ENCODE measurements at regions of chr6 and their contacts with region 1.

Region 1: GRCh38 chr6:110958329-110959192 is at the start of gene GTF3C6:
- DNase-seq: peak; percentile 93
- ATAC-seq: peak; percentile 99
- H3K4me3 Mint-ChIP-seq: peak within 1 kb of the TSS; percentile 96
- H3K27ac Mint-ChIP-seq: peak within 1 kb of the TSS; percentile 98
- H3K4me1 Mint-ChIP-seq: peaks cover 10% of the 10 kb centered on the region
- H3K27me3 Mint-ChIP-seq: peaks cover 4% of the 10 kb centered on the region
- total RNA-seq, gene GTF3C6: 60.9 to 65.4 TPM

Region 2: DNA sequence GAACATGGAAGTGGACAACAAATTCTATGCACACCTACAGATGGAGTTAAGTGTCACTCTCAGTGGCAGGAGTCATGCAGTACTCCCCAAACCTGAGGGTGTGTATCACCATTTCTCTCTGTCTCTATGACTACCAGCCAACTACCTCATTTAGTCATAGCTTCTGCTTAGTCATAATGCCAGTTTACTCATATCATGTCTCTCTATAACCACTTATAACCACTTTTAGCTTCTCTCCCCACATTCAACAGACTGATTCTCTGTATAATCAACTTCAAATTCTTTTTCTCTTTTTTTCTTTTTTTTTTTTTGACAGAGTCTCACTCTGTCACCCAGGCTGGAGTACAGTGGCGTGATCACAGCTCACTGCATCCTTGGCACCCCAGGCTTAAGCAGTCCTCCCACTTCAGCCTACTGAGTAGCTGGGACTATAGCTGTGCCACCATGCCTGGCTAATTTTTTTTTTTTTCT is 13.8 kb before region 1 on chr6:
- POLR2A ChIA-PET with region 1: interaction called, 12 read pairs
- DNase-seq: no peak
- ATAC-seq: peak; percentile 96
- H3K4me3 Mint-ChIP-seq: no peak overlapping the region
- H3K27ac Mint-ChIP-seq: no peak overlapping the region
- H3K4me1 Mint-ChIP-seq: peaks cover 5% of the 10 kb centered on the region
- H3K27me3 Mint-ChIP-seq: peaks cover 2% of the 10 kb centered on the region

Region 3: DNA sequence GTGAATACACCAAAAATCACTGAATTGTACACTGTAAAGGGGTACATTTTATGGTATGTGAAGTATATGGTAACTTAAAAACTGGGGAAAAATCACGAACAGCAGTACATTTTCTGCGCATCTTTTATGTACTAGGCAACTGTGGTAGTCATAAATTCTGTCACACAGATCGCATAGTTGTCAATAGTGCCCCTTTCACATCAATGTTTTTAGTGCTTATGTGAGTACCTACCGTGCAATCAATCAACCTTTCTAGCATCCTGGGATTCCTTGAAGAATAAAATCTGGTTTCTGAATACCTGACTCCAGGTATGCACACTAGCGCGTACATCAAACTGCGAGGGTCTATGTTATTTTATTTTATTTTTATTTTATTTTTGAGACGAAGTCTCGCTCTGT is 22.6 kb after region 1 on chr6:
- POLR2A ChIA-PET with region 1: interaction called, 33 read pairs
- DNase-seq: no peak
- ATAC-seq: no peak
- H3K4me3 Mint-ChIP-seq: peak overlapping the region; percentile 97
- H3K27ac Mint-ChIP-seq: peak overlapping the region; percentile 99
- H3K4me1 Mint-ChIP-seq: peaks cover 24% of the 10 kb centered on the region
- H3K27me3 Mint-ChIP-seq: no peaks in the 10 kb centered on the region

Measured in activated naive CD8-positive, alpha-beta T cell treated with anti-CD3 and anti-CD28 coated beads, Interleukin-2, amount 10 ng/mL, durations not matched to agents 7 days and 5 days (primary cell).